ENCODE measurements at regions of chr4 and their contacts with region 1.

Region 1: DNA sequence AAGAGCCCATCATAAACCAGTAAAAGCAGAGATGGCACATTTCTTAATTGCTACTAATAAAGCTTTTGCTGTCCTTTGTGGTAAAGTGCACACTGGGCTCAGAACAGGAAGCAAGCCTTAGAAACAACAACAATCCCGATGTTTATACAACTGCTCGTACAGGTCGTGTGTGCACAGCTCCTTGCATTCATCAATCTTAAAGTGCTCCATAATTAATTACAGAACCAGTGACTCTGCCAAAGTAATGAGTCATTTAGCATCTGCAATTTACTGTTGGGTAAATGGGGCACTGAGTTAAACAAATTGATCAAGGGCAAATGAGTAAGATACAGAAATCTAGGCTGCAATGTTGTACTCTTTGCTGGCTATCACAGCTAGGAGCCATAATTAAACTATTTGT is 61.3 kb upstream of the TXK start:
- DNase-seq: no peak
- ATAC-seq: peak; percentile 48
- H3K4me3 ChIP-seq: peak overlapping the region; percentile 81
- H3K27ac ChIP-seq: peak overlapping the region; percentile 86
- H3K4me1 ChIP-seq: peaks cover 46% of the 10 kb centered on the region
- H3K27me3 ChIP-seq: no peaks in the 10 kb centered on the region
- CTCF ChIP-seq: no peak
- EP300 ChIP-seq: peak in 1 of 2 experiments; percentile 20; a peak in 1 of 4 replicates
- POLR2A ChIP-seq: no peak
- RAD21 ChIP-seq: no peak

Region 2: GRCh38 chr4:48173056-48173991 is 22.1 kb before region 1 on chr4:
- CTCF ChIA-PET with region 1: interaction called, 35 read pairs
- POLR2A ChIA-PET with region 1: interaction called, 3 read pairs
- RAD21 ChIA-PET with region 1: interaction called, 11 read pairs
- SMC1A ChIA-PET with region 1: interaction called, 18 read pairs
- in situ Hi-C with region 1: no loop called
- intact Hi-C with region 1: no loop called
- DNase-seq: peak; percentile 55
- ATAC-seq: peak; percentile 85
- H3K4me3 ChIP-seq: no peak overlapping the region
- H3K27ac ChIP-seq: peak overlapping the region; percentile 59
- H3K4me1 ChIP-seq: peaks cover 36% of the 10 kb centered on the region
- H3K27me3 ChIP-seq: no peaks in the 10 kb centered on the region
- CTCF ChIP-seq: no peak
- EP300 ChIP-seq: no peak; a peak in 1 of 4 replicates
- POLR2A ChIP-seq: no peak
- RAD21 ChIP-seq: no peak

Region 3: GRCh38 chr4:48237996-48238645 is 42.7 kb after region 1 on chr4:
- CTCF ChIA-PET with region 1: interaction called, 4 read pairs
- POLR2A ChIA-PET with region 1: interaction called, 4 read pairs
- RAD21 ChIA-PET with region 1: no interaction called
- SMC1A ChIA-PET with region 1: interaction called, 10 read pairs
- in situ Hi-C with region 1: no loop called
- intact Hi-C with region 1: no loop called
- DNase-seq: no peak
- ATAC-seq: no peak
- H3K4me3 ChIP-seq: no peak overlapping the region
- H3K27ac ChIP-seq: no peak overlapping the region
- H3K4me1 ChIP-seq: peaks cover 7% of the 10 kb centered on the region
- H3K27me3 ChIP-seq: no peaks in the 10 kb centered on the region
- CTCF ChIP-seq: no peak
- EP300 ChIP-seq: no peak
- POLR2A ChIP-seq: no peak
- RAD21 ChIP-seq: no peak

Region 4: DNA sequence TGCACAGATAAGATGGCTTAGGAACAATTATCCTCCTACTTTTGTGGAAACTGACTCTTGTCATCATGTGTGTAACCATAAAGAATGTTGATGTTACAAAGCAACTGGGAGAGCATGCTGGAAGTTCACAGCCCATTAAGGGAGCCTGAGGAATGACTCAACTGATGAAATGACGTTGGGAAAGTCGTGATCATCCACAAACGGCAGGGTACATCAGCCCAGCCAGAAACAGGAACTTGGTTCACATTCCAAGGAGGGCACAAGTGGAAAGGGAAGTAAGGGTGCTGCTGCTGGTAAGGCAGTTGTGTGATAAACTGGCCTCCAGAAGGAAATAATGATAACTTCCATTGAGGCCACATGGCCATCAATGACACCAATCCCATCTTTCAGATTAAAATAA is 67.6 kb after region 1 on chr4:
- CTCF ChIA-PET with region 1: interaction called, 4 read pairs
- POLR2A ChIA-PET with region 1: interaction called, 6 read pairs
- RAD21 ChIA-PET with region 1: interaction called, 9 read pairs
- SMC1A ChIA-PET with region 1: interaction called, 24 read pairs
- in situ Hi-C with region 1: no loop called
- intact Hi-C with region 1: loop called (anchors 2 kb)
- DNase-seq: no peak
- ATAC-seq: no peak
- H3K4me3 ChIP-seq: no peak overlapping the region
- H3K27ac ChIP-seq: no peak overlapping the region
- H3K4me1 ChIP-seq: peaks cover 27% of the 10 kb centered on the region
- H3K27me3 ChIP-seq: no peaks in the 10 kb centered on the region
- CTCF ChIP-seq: no peak
- EP300 ChIP-seq: no peak
- POLR2A ChIP-seq: no peak
- RAD21 ChIP-seq: no peak

Measured in GM12878 (cell line).